ENCODE measurements at regions of chr14 and their contacts with region 1.

Region 1: GRCh38 chr14:89178802-89179535 is 238.1 kb downstream of the FOXN3 start:
- DNase-seq: no peak
- H3K4me3 Mint-ChIP-seq: no peak overlapping the region
- H3K27ac Mint-ChIP-seq: no peak overlapping the region
- H3K4me1 Mint-ChIP-seq: peaks cover 9% of the 10 kb centered on the region
- H3K27me3 Mint-ChIP-seq: no peaks in the 10 kb centered on the region

Region 2: GRCh38 chr14:88929656-88930425 is 249.1 kb before region 1 on chr14:
- CTCF ChIA-PET with region 1: no interaction called
- intact Hi-C with region 1: no loop called
- DNase-seq: no peak
- H3K4me3 Mint-ChIP-seq: no peak overlapping the region
- H3K27ac Mint-ChIP-seq: no peak overlapping the region
- H3K4me1 Mint-ChIP-seq: no peaks in the 10 kb centered on the region
- H3K27me3 Mint-ChIP-seq: peaks cover 23% of the 10 kb centered on the region

Region 3: DNA sequence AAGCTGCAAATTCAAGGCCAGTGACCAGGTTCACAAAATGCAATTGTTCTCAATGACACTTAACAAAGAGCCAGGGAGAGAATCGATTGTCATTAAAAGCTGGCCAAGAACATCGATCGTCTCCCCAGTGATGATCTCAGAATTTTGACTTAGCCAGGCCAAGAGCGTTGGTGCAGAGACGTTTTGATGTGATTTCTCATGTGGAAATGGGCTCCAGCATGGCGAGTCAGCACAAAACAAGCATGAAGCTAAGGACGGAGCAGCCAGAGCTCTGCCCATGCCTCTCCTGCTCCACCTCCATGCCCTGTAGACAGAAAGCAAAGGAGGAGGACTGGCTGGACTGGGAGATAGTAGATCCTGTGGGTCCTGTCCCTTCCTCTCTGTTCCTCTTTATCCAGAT is 32.7 kb before region 1 on chr14:
- CTCF ChIA-PET with region 1: no interaction called
- intact Hi-C with region 1: no loop called
- DNase-seq: no peak
- H3K4me3 Mint-ChIP-seq: no peak overlapping the region
- H3K27ac Mint-ChIP-seq: no peak overlapping the region
- H3K4me1 Mint-ChIP-seq: no peaks in the 10 kb centered on the region
- H3K27me3 Mint-ChIP-seq: no peaks in the 10 kb centered on the region

Region 4: GRCh38 chr14:89378119-89378518 is 199.2 kb after region 1 on chr14:
- CTCF ChIA-PET with region 1: no interaction called
- intact Hi-C with region 1: loop called (anchors 1 kb)
- DNase-seq: peak; percentile 72
- H3K4me3 Mint-ChIP-seq: no peak overlapping the region
- H3K27ac Mint-ChIP-seq: no peak overlapping the region
- H3K4me1 Mint-ChIP-seq: peaks cover 44% of the 10 kb centered on the region
- H3K27me3 Mint-ChIP-seq: no peaks in the 10 kb centered on the region

Measured in activated naive CD4-positive, alpha-beta T cell treated with anti-CD3 and anti-CD28 coated beads for 36 hours (primary cell).